MCF 10A (cell line): ENCODE measurements at regions of chr16 and their contacts with region 1.

Region 1: GRCh38 chr16:11639925-11640899 is 28.0 kb upstream of the SNN start:
- DNase-seq: peak; percentile 97
- H3K4me3 Mint-ChIP-seq: peak overlapping the region; percentile 44
- H3K27ac Mint-ChIP-seq: peak overlapping the region; percentile 89
- H3K4me1 Mint-ChIP-seq: peaks cover 23% of the 10 kb centered on the region
- H3K27me3 Mint-ChIP-seq: no peaks in the 10 kb centered on the region
- CTCF ChIP-seq: no peak

Region 2: GRCh38 chr16:11354733-11355574 is 285.3 kb before region 1 on chr16:
- CTCF ChIA-PET with region 1: no interaction called
- POLR2A ChIA-PET with region 1: no interaction called
- intact Hi-C with region 1: no loop called
- DNase-seq: no peak
- H3K4me3 Mint-ChIP-seq: no peak overlapping the region
- H3K27ac Mint-ChIP-seq: no peak overlapping the region
- H3K4me1 Mint-ChIP-seq: peaks cover 22% of the 10 kb centered on the region
- H3K27me3 Mint-ChIP-seq: no peaks in the 10 kb centered on the region
- CTCF ChIP-seq: no peak

Region 3: DNA sequence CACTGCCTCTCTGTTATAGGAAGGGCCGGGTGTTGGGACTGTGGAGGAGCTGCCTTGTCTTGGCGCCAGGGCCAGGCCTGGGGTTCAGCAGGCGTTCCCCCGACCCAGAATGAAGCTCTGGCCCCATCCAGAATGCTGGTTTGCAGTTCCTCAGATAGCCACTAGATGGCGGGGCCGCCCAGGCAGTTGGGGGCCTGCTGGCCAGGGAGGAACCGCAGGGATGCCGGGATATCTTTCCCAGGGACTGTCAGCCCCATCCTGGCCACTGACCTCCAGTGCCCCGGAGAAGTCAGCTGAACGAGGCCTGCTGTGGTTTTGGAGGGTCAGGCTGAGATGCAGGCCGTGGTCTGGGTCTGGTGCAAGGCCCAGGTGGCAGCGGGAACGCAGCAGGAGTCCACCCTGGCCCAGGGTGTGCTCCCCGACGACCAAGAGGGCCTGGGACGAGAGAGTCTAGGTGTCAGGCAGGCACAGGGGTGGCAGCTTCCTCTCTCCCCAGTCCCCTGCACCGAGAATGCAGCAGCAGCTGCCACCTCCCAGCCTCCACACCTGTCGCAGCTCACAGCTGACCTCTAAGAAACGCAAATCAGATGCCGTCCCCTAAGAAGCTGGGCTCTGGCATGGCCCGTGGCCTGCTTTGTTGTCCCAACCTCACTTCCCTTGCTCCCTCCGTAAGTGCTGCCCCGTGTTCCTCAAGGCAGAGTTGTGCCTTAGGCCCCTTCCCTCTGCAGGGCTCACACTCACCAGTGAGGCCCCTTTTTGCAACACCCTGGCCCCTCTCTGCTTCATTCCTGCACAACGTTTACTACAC is 243.8 kb before region 1 on chr16:
- CTCF ChIA-PET with region 1: interaction called, 55 read pairs
- POLR2A ChIA-PET with region 1: interaction called, 3 read pairs
- intact Hi-C with region 1: no loop called
- DNase-seq: peak; percentile 63
- H3K4me3 Mint-ChIP-seq: no peak overlapping the region
- H3K27ac Mint-ChIP-seq: no peak overlapping the region
- H3K4me1 Mint-ChIP-seq: no peaks in the 10 kb centered on the region
- H3K27me3 Mint-ChIP-seq: no peaks in the 10 kb centered on the region
- CTCF ChIP-seq: peak; percentile 99

Region 4: DNA sequence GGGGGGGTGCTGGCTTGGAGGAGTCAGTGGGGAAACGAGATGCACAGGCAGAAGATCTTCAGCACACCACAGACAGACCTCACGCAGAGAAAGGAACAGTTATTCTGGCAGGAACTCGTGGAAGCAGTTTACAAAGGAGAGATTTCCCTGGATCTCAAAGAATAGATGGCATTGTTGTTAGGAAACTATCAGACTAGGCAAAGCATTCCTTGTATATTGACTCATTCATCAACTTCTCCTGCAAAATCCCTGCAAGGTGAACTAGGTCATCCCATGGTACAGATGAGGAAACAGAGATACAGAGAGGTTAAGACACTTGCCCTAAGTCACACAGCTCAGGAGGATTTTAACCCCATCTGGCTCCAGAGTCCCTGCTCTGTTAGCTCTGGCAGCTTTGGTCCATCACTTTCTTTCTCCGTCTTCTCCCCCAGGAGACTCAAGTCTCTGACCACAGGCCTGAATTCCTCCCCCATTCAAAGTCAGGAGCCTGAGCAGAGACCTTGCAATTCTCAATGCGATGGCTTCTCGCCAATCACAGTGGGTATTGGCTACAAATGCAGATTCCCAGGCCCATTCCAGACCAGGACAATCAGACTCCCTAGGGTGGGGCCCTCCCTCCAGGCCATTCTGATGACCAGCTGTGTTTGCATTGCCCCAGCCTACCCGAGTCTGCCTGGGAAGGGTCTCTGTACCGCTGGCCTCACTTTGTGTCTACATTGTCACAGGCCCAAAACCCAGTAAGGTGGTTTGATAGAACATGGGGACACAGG is 109.9 kb before region 1 on chr16:
- CTCF ChIA-PET with region 1: interaction called, 23 read pairs
- POLR2A ChIA-PET with region 1: interaction called, 30 read pairs
- intact Hi-C with region 1: loop called (anchors 1 kb)
- DNase-seq: no peak
- H3K4me3 Mint-ChIP-seq: no peak overlapping the region
- H3K27ac Mint-ChIP-seq: no peak overlapping the region
- H3K4me1 Mint-ChIP-seq: peaks cover 16% of the 10 kb centered on the region
- H3K27me3 Mint-ChIP-seq: no peaks in the 10 kb centered on the region
- CTCF ChIP-seq: no peak

Region 5: GRCh38 chr16:11586856-11587642 is 53.2 kb before region 1 on chr16 and contains the start of gene LITAF:
- CTCF ChIA-PET with region 1: interaction called, 10 read pairs
- POLR2A ChIA-PET with region 1: interaction called, 26 read pairs
- intact Hi-C with region 1: loop called (anchors 1 kb)
- DNase-seq: peak; percentile 66
- H3K4me3 Mint-ChIP-seq: peak within 1 kb of the TSS; percentile 84
- H3K27ac Mint-ChIP-seq: peak within 1 kb of the TSS; percentile 96
- H3K4me1 Mint-ChIP-seq: peaks cover 31% of the 10 kb centered on the region
- H3K27me3 Mint-ChIP-seq: no peaks in the 10 kb centered on the region
- CTCF ChIP-seq: no peak
- total RNA-seq, gene LITAF: 120 and 161 TPM in 2 replicates

Region 6: DNA sequence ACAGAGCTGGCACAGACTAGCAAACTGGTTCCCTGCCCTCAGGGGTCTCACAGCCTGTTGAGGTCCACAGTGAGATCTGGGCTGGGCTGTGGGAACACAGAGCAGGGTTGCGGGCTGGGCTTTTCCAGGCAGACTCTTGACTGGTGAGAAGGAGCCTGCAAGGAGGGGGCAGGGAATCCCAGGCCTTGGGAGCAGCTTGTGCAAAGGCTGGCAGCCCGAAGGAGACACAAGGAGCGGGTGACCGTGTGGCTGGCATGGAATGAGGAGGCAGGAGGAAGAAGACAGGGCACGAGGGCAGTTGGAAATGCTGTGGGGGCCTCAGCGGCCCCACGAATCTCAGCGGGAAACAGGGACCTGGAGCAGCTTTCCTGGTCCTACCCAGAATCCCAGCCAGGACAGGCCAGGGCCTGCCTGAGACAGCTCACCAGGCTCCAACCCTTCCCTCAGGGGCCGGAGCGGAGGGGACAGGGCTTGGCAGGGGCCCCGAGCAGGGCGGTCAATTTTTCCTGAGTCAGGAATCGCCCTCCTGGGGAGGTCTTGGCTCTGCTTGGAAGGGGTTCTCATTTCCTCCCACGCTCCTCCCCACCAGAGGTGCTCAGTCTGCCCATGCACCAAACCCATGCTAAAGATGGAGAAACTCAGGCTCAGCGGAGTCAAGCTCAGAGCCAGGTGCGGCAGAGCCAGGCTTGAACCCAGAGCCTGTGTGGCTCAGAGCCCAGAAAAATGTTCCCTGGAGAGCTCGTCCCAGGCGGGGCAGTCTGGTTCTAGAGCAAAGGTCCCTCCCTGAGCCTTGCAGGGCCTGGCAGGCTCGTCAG is 18.9 kb after region 1 on chr16:
- CTCF ChIA-PET with region 1: interaction called, 31 read pairs
- POLR2A ChIA-PET with region 1: interaction called, 40 read pairs
- intact Hi-C with region 1: no loop called
- DNase-seq: peak; percentile 97
- H3K4me3 Mint-ChIP-seq: peak overlapping the region; percentile 37
- H3K27ac Mint-ChIP-seq: peak overlapping the region; percentile 94
- H3K4me1 Mint-ChIP-seq: peaks cover 18% of the 10 kb centered on the region
- H3K27me3 Mint-ChIP-seq: no peaks in the 10 kb centered on the region
- CTCF ChIP-seq: no peak

Region 7: DNA sequence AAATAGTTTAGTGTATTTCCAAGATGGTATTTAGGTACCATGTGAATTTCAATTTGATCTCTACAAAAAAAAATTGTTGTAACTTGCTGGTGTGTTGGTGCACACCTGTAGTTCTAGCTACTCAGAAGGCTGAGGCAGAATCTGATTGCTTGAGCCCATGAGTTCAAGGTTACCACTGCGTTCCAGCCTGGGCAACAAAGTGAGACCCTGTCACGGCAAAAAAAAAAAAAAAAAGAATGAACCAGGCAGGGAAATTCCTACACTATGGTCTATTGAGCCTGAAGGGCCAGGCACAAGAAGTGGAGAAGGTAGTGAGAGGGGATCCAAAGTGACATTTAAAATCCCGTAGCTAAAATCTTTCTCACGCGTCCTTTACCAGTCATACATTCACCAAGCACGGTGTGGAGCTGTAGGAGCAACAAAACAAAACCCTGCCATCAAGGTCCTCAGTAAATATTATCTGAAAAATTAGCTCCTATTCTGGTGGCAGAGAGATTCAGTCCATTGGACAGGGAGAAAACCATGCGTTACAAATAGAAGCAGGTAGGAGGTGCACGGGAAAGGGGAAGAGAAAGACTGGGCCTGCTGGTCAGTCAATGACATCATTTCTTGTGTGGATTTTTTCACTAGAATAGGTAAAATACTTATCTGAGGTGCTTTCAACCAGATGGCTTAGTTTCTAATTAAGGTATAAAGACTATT is 75.2 kb after region 1 on chr16:
- CTCF ChIA-PET with region 1: interaction called, 32 read pairs
- POLR2A ChIA-PET with region 1: interaction called, 5 read pairs
- intact Hi-C with region 1: no loop called
- DNase-seq: no peak
- H3K4me3 Mint-ChIP-seq: no peak overlapping the region
- H3K27ac Mint-ChIP-seq: no peak overlapping the region
- H3K4me1 Mint-ChIP-seq: no peaks in the 10 kb centered on the region
- H3K27me3 Mint-ChIP-seq: no peaks in the 10 kb centered on the region
- CTCF ChIP-seq: no peak